HepG2 (cell line): ENCODE measurements at regions of chr12 and their contacts with region 1.

Region 1: GRCh38 chr12:12786716-12787601 is 1.5 kb downstream of the APOLD1 start:
- DNase-seq: peak; percentile 32
- ATAC-seq: peak; percentile 92
- H3K4me3 ChIP-seq: peak overlapping the region in 2 of 3 experiments; percentile 18 to 51; a peak in 2 of 6 replicates
- H3K27ac ChIP-seq: no peak overlapping the region
- H3K4me1 ChIP-seq: peaks cover 37% of the 10 kb centered on the region
- H3K27me3 ChIP-seq: peaks cover 0 to 40% of the 10 kb centered on the region in 2 experiments; a peak in 4 of 5 replicates
- CTCF ChIP-seq: no peak
- EP300 ChIP-seq: no peak
- POLR2A ChIP-seq: peak in 1 of 2 experiments; percentile 50; a peak in 2 of 4 replicates
- RAD21 ChIP-seq: no peak

Region 2: GRCh38 chr12:12813120-12814101 is 26.5 kb after region 1 on chr12 and contains the start of gene DDX47:
- CTCF ChIA-PET with region 1: interaction called, 7 read pairs
- POLR2A ChIA-PET with region 1: no interaction called
- in situ Hi-C with region 1: no loop called
- intact Hi-C with region 1: loop called (anchors 2 kb)
- DNase-seq: peak; percentile 85
- ATAC-seq: peak; percentile 97
- H3K4me3 ChIP-seq: peak within 1 kb of the TSS; percentile 92 to 100 (median 96)
- H3K27ac ChIP-seq: peak within 1 kb of the TSS; percentile 53
- H3K4me1 ChIP-seq: peaks cover 48% of the 10 kb centered on the region
- H3K27me3 ChIP-seq: peaks cover 0 to 6% of the 10 kb centered on the region in 2 experiments; a peak in 2 of 5 replicates
- CTCF ChIP-seq: peak; percentile 98
- EP300 ChIP-seq: no peak
- POLR2A ChIP-seq: peak in 1 of 2 experiments; percentile 72; a peak in 2 of 4 replicates
- RAD21 ChIP-seq: 0 out of 2 replicates have a peak, but pooled peaks have one; percentile 23
- total RNA-seq, gene DDX47: 78.7 and 101 TPM in 2 replicates